Activated naive CD4-positive, alpha-beta T cell treated with anti-CD3 and anti-CD28 coated beads, Interleukin-2, amount 10 ng/mL, durations not matched to agents 7 days and 5 days (primary cell): ENCODE measurements at regions of chr11 and their contacts with region 1.

Region 1: DNA sequence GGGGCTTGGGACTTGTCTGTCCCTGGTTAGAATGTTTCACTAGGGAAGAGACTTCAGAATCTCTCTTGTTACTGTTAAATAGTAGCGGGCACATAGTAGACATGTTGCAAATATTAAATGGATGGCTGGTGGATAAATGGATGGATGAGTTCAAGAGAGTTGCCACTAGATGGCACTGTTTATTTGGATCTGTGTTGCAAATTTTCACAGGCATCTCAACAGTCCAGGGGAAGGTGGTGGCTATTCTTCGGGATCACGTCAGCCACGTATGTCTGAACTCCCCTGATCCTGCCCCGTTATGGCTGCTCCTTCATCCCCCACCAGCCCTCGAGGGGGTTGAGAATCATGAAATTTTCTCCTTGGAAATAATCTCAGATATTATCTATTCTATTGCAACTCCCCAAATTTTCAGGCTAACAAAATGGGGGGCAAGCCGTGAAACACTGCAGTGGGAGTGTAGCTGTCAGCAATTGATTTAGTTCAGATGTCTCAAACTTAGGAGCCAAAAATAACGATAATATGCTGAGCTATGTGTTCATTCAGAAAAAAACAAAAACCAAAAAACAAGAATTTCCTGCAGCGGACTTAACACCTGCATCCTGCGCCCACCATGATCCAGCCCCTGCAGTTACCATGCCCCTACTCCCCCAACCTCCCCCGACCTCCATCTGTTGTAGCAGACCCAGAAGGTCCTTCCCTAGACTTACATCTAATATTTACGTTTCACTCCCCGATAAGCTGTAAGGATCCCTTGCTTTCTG is 29.1 kb upstream of the BIRC3 start:
- DNase-seq: peak; percentile 44
- H3K4me3 Mint-ChIP-seq: no peak overlapping the region
- H3K27ac Mint-ChIP-seq: no peak overlapping the region
- H3K4me1 Mint-ChIP-seq: peaks cover 32% of the 10 kb centered on the region
- H3K27me3 Mint-ChIP-seq: peaks cover 4% of the 10 kb centered on the region

Region 2: GRCh38 chr11:102108741-102109140 is 179.4 kb before region 1 on chr11:
- CTCF ChIA-PET with region 1: no interaction called
- DNase-seq: no peak
- H3K4me3 Mint-ChIP-seq: no peak overlapping the region
- H3K27ac Mint-ChIP-seq: no peak overlapping the region
- H3K4me1 Mint-ChIP-seq: peaks cover 17% of the 10 kb centered on the region
- H3K27me3 Mint-ChIP-seq: peaks cover 58% of the 10 kb centered on the region

Region 3: GRCh38 chr11:102317099-102317767 is 29.1 kb after region 1 on chr11 and contains the start of gene BIRC3:
- CTCF ChIA-PET with region 1: interaction called, 47 read pairs
- DNase-seq: peak; percentile 94
- H3K4me3 Mint-ChIP-seq: peak within 1 kb of the TSS; percentile 87
- H3K27ac Mint-ChIP-seq: peak within 1 kb of the TSS; percentile 97
- H3K4me1 Mint-ChIP-seq: peaks cover 78% of the 10 kb centered on the region
- H3K27me3 Mint-ChIP-seq: no peaks in the 10 kb centered on the region

Region 4: GRCh38 chr11:102332611-102332994 is 44.5 kb after region 1 on chr11:
- CTCF ChIA-PET with region 1: interaction called, 17 read pairs
- DNase-seq: no peak
- H3K4me3 Mint-ChIP-seq: no peak overlapping the region
- H3K27ac Mint-ChIP-seq: no peak overlapping the region
- H3K4me1 Mint-ChIP-seq: no peaks in the 10 kb centered on the region
- H3K27me3 Mint-ChIP-seq: no peaks in the 10 kb centered on the region

Region 5: GRCh38 chr11:102346748-102347461 is 58.8 kb after region 1 on chr11 and contains the start of gene BIRC2:
- CTCF ChIA-PET with region 1: interaction called, 136 read pairs
- DNase-seq: peak; percentile 95
- H3K4me3 Mint-ChIP-seq: peak within 1 kb of the TSS; percentile 98
- H3K27ac Mint-ChIP-seq: peak within 1 kb of the TSS; percentile 96
- H3K4me1 Mint-ChIP-seq: peaks cover 43% of the 10 kb centered on the region
- H3K27me3 Mint-ChIP-seq: no peaks in the 10 kb centered on the region

Region 6: GRCh38 chr11:102495161-102496042 is 207.3 kb after region 1 on chr11:
- CTCF ChIA-PET with region 1: interaction called, 26 read pairs
- DNase-seq: peak; percentile 44
- H3K4me3 Mint-ChIP-seq: no peak overlapping the region
- H3K27ac Mint-ChIP-seq: no peak overlapping the region
- H3K4me1 Mint-ChIP-seq: peaks cover 19% of the 10 kb centered on the region
- H3K27me3 Mint-ChIP-seq: peaks cover 26% of the 10 kb centered on the region

Region 7: DNA sequence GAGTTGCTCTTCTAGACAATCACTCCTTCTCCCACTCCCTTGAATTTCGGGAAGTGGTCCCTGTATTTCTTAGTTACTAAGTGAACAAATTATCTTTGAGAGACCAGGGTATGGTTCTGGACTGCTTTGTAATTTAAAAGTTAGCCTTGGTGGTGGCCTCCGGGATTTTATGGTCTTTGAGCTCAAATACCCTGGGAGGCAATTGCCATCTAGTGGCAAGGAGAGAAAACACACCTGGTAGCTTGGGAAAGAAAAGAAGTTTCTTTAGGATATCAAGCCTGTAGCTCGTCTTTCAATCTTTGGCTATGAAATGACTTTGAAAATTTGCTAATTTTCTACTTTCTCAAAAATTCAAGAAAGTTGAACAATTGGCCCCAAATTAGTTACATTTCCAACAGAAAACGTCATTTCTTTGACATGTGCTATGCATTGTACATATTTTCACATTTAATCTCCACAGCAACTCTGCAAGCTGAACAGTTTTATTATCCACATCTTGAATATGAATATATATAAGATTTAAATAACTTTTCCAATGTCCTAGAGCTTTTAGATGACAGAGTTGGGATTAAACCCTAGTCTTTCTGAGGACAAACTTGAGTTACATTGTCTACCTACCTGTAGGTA is 378.3 kb after region 1 on chr11:
- CTCF ChIA-PET with region 1: interaction called, 19 read pairs
- DNase-seq: peak; percentile 33
- H3K4me3 Mint-ChIP-seq: no peak overlapping the region
- H3K27ac Mint-ChIP-seq: no peak overlapping the region
- H3K4me1 Mint-ChIP-seq: no peaks in the 10 kb centered on the region
- H3K27me3 Mint-ChIP-seq: peaks cover 4% of the 10 kb centered on the region